Posterior cingulate gyrus (tissue), 11 donors: ENCODE measurements at regions of chr18 and their contacts with region 1.

Region 1: DNA sequence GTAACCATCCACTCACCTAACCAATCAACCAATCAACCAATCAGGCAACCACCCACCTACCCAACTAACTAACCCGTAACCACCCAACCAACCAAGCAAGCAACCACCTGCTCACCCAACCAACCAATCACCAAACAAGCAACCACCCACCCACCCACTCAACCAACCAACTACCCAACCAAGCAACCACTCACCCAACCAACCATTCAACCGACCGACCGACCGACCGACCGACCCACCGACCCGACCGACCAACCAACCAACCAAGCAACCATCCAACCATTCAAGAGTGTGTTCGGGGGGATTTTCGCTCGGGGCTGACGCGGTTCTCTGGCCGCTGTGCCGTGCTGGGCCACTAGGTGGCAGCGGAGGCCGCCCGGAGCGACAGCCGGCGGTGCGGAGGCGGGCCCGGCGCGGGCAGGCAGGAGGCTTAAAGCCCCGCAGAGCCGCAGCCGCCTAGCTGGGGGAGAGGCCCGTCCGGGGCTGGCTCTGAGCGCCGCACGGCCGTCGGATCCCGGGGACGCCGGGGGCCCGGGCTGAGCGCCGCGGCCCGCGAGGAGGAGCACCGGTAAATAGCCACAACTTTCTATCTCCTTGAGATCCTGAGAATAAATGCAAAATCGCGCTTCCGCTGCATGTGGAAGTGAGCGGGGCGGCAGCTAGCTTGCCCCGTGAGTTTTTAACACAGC is at the start of gene MC5R:
- DNase-seq: peak; percentile 38 to 96 (median 68)

Region 2: GRCh38 chr18:13900631-13901030 is 76.8 kb after region 1 on chr18:
- intact Hi-C with region 1: no loop called
- DNase-seq: no peak

Region 3: GRCh38 chr18:14031053-14031452 is 207.2 kb after region 1 on chr18:
- intact Hi-C with region 1: no loop called
- DNase-seq: no peak

Region 4: DNA sequence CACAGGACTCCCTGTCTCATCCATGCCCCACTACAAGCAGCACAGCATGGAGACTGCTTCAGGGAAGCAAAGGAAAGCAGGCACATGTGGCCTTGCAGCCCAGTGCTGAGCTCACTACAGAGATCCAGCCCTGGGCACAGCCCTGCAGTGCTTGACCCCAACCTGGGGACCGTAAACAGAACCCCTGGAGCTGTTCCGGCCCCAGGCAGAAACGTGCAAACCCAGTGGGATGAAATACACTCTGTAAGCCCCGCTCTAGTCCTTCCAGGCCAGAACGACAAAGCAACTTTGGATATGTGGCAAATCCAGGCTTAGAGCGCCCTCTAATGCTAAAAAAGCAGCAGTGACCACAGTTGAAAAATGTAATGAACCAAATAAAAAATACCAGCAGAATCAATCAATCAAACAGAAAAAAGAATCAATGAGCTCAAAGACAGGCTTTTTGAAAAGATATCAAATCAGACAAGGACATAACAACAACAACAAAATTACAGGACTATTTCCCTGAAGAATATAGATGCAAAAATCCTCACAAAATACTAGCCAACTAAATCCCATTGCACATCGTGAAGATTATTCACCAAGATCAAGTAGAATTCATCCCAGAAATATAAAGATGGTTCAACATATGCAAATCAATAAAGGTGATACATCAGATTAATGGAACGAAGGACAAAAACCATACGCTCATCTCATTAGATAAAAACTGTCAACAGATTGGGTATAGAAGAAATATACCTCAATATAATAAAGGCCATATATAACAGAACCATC is 262.8 kb after region 1 on chr18:
- intact Hi-C with region 1: loop called (anchors 2 kb)
- DNase-seq: peak in 3 of 10 donors; percentile 21 to 76 (median 42)